Dorsolateral prefrontal cortex (tissue), 120 donors: ENCODE measurements at regions of chr6 and their contacts with region 1.

Region 1: DNA sequence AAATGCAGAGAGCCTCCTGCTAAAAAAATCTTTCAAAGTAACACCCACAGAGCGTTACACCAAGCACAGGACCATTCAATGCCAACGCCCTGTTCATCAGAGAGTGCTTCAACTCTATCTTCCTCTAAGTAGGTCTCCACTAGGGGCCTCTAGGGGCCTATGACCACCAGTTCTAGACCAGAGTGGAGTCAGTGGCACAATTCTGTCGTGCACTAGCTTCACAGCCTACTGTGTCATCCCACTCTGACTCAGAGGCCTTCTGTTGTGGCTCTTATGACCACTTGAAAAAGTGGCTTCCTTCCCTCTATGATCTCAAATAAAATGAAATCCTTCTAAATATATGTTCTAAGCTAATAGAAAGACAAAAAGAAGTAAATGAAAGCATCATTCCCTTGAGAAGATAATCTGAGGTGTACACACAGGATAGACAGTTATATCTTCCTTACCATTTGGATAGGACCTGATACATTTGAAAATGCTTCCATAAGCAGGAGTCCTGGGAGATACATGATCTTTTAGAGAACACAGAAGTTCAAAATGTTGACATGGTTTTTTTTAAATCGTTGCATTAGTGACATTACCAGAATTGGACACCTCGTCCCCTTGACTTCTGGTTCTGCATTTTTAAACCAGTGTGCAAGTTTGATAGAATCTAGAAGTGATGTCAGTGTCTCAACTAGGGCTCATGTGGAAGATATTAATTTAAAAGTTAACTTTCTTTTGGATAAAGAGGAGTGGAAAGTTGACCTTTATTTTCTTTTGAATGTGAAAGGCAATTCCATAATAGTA is 151.9 kb downstream of the SH3BGRL2 start:
- DNase-seq: no peak
- H3K4me3 ChIP-seq: no peak overlapping the region
- H3K27ac ChIP-seq: no peak overlapping the region
- H3K27me3 ChIP-seq: no peaks in the 10 kb centered on the region
- CTCF ChIP-seq: no peak

Region 2: DNA sequence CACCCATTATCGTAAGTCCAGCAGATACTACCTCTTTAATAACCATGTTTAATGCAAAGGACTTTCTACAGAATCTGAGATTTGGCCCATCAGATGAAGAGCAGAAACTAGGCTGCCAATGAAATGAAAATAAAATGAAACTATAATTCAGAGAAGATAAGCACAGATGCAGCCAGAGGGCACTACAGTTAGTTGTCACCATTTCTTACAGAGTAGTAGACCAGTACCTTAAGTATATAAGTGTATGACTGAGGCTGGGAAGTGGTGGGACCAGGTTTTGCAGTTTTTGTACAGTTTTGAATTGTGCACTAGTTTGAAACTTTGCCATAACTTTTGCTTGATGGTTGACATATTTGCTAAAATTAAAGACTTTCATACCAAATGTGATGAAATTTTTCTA is 72.2 kb after region 1 on chr6:
- intact Hi-C with region 1: loop called in 1 of 2 experiments (anchors 5 kb)
- DNase-seq: no peak
- H3K4me3 ChIP-seq: no peak overlapping the region
- H3K27ac ChIP-seq: no peak overlapping the region
- H3K27me3 ChIP-seq: no peaks in the 10 kb centered on the region
- CTCF ChIP-seq: no peak